ENCODE measurements at regions of chr20 and their contacts with region 1.

Region 1: DNA sequence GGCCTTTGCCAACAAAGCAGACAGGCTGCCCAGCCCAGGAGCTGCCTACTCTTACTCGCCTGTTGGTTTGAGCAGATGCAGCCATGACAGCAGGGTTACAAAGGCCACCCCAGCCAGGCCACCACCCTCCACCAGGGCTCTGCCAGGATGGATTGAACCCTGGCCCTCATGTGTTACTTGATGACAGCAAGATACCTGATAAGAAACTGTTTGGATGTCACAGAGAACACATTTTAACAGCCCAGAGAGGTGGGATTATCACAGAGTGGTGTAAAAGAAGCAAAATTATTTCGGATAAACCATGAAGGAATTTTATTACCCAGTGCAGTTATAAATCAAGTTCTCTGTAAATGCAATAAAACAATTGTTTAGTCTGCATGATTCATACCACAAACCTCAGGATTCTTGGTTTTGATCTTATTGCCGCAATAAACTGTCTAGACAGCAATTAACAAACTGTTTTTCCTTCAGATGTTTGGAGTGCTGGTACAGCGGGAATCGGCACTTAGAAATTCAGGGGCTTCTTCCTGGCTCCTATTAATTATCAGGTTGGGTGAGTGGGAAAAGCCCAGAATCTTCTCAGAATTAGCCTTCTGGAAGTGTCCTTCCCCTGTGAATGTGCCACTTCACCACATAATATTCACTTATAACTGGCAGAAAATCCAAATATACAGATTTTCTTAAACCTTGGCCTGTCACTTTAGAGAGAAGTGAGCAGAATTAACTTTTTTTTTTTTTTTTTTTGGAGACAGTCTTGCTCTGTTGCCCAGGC is 58.0 kb upstream of the SALL4 start:
- DNase-seq: peak; percentile 64 to 79
- H3K4me3 ChIP-seq: no peak overlapping the region
- H3K4me3 Mint-ChIP-seq: no peak overlapping the region
- H3K27ac Mint-ChIP-seq: peak overlapping the region; percentile 34
- H3K4me1 ChIP-seq: peaks cover 19% of the 10 kb centered on the region
- H3K4me1 Mint-ChIP-seq: peaks cover 26% of the 10 kb centered on the region
- H3K27me3 ChIP-seq: no peaks in the 10 kb centered on the region
- H3K27me3 Mint-ChIP-seq: no peaks in the 10 kb centered on the region
- CTCF ChIP-seq: no peak

Region 2: GRCh38 chr20:51789434-51789833 is 70.9 kb before region 1 on chr20:
- CTCF ChIA-PET with region 1: no interaction called
- POLR2A ChIA-PET with region 1: no interaction called
- intact Hi-C with region 1: no loop called
- DNase-seq: no peak
- H3K4me3 ChIP-seq: no peak overlapping the region
- H3K4me3 Mint-ChIP-seq: no peak overlapping the region
- H3K27ac Mint-ChIP-seq: peak overlapping the region; percentile 27
- H3K4me1 ChIP-seq: no peaks in the 10 kb centered on the region
- H3K4me1 Mint-ChIP-seq: peaks cover 9% of the 10 kb centered on the region
- H3K27me3 ChIP-seq: no peaks in the 10 kb centered on the region
- H3K27me3 Mint-ChIP-seq: no peaks in the 10 kb centered on the region
- CTCF ChIP-seq: no peak

Region 3: GRCh38 chr20:51889466-51889865 is 29.2 kb after region 1 on chr20:
- CTCF ChIA-PET with region 1: no interaction called
- POLR2A ChIA-PET with region 1: no interaction called
- intact Hi-C with region 1: loop called (anchors 2 kb)
- DNase-seq: peak; percentile 62 to 72
- H3K4me3 ChIP-seq: no peak overlapping the region
- H3K4me3 Mint-ChIP-seq: peak overlapping the region; percentile 66
- H3K27ac Mint-ChIP-seq: peak overlapping the region; percentile 77
- H3K4me1 ChIP-seq: peaks cover 52% of the 10 kb centered on the region
- H3K4me1 Mint-ChIP-seq: peaks cover 49% of the 10 kb centered on the region
- H3K27me3 ChIP-seq: no peaks in the 10 kb centered on the region
- H3K27me3 Mint-ChIP-seq: no peaks in the 10 kb centered on the region
- CTCF ChIP-seq: no peak

Region 4: GRCh38 chr20:51910321-51911053 is 50.2 kb after region 1 on chr20:
- CTCF ChIA-PET with region 1: no interaction called
- POLR2A ChIA-PET with region 1: no interaction called
- intact Hi-C with region 1: no loop called
- DNase-seq: peak; percentile 78 to 80
- H3K4me3 ChIP-seq: 0 out of 2 replicates have a peak overlapping the region, but pooled peaks have one; percentile 6
- H3K4me3 Mint-ChIP-seq: peak overlapping the region; percentile 68
- H3K27ac Mint-ChIP-seq: peak overlapping the region; percentile 82
- H3K4me1 ChIP-seq: peaks cover 39% of the 10 kb centered on the region
- H3K4me1 Mint-ChIP-seq: peaks cover 47% of the 10 kb centered on the region
- H3K27me3 ChIP-seq: no peaks in the 10 kb centered on the region
- H3K27me3 Mint-ChIP-seq: no peaks in the 10 kb centered on the region
- CTCF ChIP-seq: no peak